ENCODE measurements at regions of chr10 and their contacts with region 1.

Region 1: GRCh38 chr10:43824934-43825333 is 176.3 kb upstream of the ZNF32 start:
- DNase-seq: peak; percentile 86 to 88
- ATAC-seq: peak; percentile 86
- H3K4me3 ChIP-seq: no peak overlapping the region
- H3K27ac ChIP-seq: peak overlapping the region; percentile 61 to 90
- H3K4me1 ChIP-seq: no peaks in the 10 kb centered on the region
- H3K27me3 ChIP-seq: no peaks in the 10 kb centered on the region

Region 2: GRCh38 chr10:43808136-43808535 is 16.8 kb before region 1 on chr10:
- intact Hi-C with region 1: loop called in 1 of 2 experiments (anchors 2 kb)
- DNase-seq: no peak
- ATAC-seq: no peak
- H3K4me3 ChIP-seq: no peak overlapping the region
- H3K27ac ChIP-seq: peak overlapping the region; percentile 45 to 90
- H3K4me1 ChIP-seq: peaks cover 5% of the 10 kb centered on the region in 2 donors
- H3K27me3 ChIP-seq: no peaks in the 10 kb centered on the region

Region 3: DNA sequence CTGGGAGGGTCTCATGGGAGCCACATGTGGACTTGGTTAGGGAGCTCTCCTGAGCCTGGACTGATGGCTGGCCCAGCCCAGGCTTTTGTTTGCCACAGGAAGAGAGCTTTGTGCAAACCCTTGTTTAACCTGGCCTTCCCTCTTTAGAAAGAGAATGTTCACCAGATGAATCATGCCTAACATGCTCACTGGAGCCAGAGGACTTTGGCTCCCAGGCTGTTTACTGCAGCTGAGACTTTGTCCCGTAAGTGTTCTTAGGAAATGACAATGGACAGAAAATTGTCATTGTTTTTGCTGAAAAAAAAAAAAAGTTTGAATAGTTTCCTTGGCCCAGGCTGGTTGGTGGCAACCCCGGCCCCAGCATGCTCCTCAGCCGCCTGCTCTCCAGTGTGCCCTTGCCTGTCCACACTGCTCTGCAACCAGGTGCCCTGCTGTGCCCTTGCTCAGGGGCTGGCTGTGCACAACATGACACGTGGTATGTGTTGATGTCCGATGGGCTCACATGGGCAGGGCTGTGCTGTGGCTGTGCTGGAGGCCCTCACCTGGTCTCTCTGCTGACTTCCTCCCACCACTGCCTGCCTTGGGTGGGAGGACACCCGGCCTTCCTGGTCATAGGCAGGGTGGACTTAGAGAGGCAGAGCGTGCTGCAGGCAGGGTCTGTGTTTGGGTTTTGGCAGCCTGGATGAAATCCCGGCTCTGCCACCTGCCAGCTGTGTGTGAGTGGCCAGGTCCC is 39.1 kb after region 1 on chr10:
- intact Hi-C with region 1: loop called (anchors 5 kb)
- DNase-seq: peak in 1 of 2 donors; percentile 71
- ATAC-seq: peak; percentile 86
- H3K4me3 ChIP-seq: no peak overlapping the region
- H3K27ac ChIP-seq: peak overlapping the region; percentile 49 to 94
- H3K4me1 ChIP-seq: peaks cover 4 to 16% of the 10 kb centered on the region in 2 donors
- H3K27me3 ChIP-seq: no peaks in the 10 kb centered on the region

Region 4: DNA sequence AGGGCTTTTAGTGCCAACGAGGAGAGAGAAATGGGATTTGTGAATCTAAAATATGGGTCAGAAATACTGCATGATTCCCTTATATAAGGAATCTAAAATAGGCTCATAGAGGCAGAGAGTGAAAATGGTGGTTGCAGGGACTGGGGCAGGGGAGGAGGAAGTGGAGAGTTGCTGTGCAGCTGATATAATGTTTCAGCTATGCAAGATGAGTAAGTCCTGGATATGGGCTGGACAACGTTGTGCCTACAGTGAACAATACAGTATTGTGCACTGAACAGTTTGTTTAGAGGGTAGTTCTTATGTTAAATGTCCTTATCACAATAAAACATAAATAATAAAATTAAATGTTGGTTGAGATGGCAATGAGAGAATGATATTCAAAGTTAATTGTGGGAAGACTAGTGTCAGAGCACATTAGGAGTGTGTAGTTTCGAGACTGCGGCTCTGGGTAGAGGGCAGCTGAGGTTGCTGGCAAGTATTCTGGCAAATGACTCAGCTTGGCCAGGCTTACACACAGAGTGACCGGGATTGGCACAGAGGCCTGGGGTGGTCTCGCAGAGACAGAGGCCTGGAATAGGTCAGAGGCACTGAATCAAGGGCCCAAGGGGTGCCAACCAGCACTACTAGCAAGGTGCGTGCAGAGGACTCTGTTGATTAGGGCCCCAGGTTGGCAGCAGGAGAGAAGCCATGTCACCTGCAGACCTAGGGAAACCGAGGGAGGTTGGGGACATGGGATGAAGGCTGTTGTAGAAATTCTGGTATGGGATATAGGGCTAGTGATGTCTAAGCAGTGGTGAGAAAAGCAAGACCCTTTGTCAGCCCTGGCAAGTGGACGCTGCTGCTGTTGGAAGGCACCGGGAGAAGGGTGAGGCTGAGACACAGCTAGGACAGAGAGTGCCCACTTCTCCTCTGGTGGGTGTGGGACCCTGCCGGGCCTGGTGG is 1156.5 kb after region 1 on chr10:
- intact Hi-C with region 1: loop called in 1 of 2 experiments (anchors 5 kb)
- DNase-seq: peak; percentile 88 to 90
- ATAC-seq: peak; percentile 42
- H3K4me3 ChIP-seq: no peak overlapping the region
- H3K27ac ChIP-seq: peak overlapping the region; percentile 10 to 87
- H3K4me1 ChIP-seq: peaks cover 3 to 5% of the 10 kb centered on the region in 2 donors
- H3K27me3 ChIP-seq: no peaks in the 10 kb centered on the region